ENCODE measurements at regions of chr6 and their contacts with region 1.

Region 1: DNA sequence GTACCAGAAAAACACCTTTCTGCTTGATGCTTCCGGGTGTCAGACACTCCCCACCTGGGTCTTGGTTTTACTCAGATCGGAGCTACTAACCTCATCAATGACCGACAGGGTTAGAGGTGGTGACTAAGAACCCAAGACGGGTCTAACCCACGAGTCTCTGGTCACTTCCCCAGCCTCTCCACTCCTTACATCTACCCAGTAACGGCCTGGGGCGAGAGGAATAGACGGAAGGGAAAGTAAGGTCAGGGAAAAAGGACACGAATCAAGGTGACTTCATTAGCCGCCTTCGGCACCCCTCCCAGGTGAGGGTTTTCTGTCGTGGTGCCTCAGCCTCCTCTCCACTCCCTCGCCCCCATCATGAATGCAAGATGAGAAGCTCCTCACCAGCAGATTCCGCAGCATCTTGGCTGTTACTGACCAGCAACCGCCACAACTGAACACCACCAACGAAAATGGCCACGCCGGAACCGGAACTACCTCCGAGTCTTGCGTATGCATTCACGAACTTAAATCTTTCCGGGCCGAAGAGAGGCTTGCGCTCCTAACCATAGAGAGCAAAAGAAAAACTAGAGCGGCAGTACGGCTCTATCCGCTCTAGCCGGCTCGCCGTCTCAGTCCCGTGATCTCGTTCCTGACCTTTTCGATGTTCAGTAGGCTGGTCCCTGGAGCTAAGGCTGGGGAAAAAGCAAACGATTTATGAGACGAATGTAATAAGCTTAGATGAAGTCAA is at the start of gene COX7A2:
- DNase-seq: peak; percentile 81 to 94
- ATAC-seq: peak; percentile 95 to 98 (median 97)
- H3K4me3 ChIP-seq: peak within 1 kb of the TSS; percentile 78
- H3K4me3 Mint-ChIP-seq: peak within 1 kb of the TSS; percentile 99
- H3K27ac ChIP-seq: peak within 1 kb of the TSS; percentile 86
- H3K27ac Mint-ChIP-seq: peak within 1 kb of the TSS; percentile 97 to 98
- H3K4me1 ChIP-seq: peaks cover 18% of the 10 kb centered on the region
- H3K4me1 Mint-ChIP-seq: peaks cover 14 to 27% of the 10 kb centered on the region in 2 donors
- H3K27me3 ChIP-seq: no peaks in the 10 kb centered on the region
- H3K27me3 Mint-ChIP-seq: peaks cover 15 to 18% of the 10 kb centered on the region in 2 donors
- CTCF ChIP-seq: no peak
- total RNA-seq, gene COX7A2: 161 to 215 (median 166) TPM

Region 2: GRCh38 chr6:74912234-74912633 is 331.3 kb before region 1 on chr6:
- intact Hi-C with region 1: no loop called
- DNase-seq: no peak
- ATAC-seq: no peak
- H3K4me3 ChIP-seq: no peak overlapping the region
- H3K4me3 Mint-ChIP-seq: no peak overlapping the region
- H3K27ac ChIP-seq: no peak overlapping the region
- H3K27ac Mint-ChIP-seq: no peak overlapping the region
- H3K4me1 ChIP-seq: no peaks in the 10 kb centered on the region
- H3K4me1 Mint-ChIP-seq: no peaks in the 10 kb centered on the region
- H3K27me3 ChIP-seq: no peaks in the 10 kb centered on the region
- H3K27me3 Mint-ChIP-seq: no peaks in the 10 kb centered on the region
- CTCF ChIP-seq: no peak

Region 3: GRCh38 chr6:75171567-75171966 is 71.9 kb before region 1 on chr6:
- intact Hi-C with region 1: no loop called
- DNase-seq: no peak
- ATAC-seq: no peak
- H3K4me3 ChIP-seq: no peak overlapping the region
- H3K4me3 Mint-ChIP-seq: no peak overlapping the region
- H3K27ac ChIP-seq: no peak overlapping the region
- H3K27ac Mint-ChIP-seq: no peak overlapping the region
- H3K4me1 ChIP-seq: no peaks in the 10 kb centered on the region
- H3K4me1 Mint-ChIP-seq: no peaks in the 10 kb centered on the region
- H3K27me3 ChIP-seq: no peaks in the 10 kb centered on the region
- H3K27me3 Mint-ChIP-seq: no peaks in the 10 kb centered on the region
- CTCF ChIP-seq: no peak

Region 4: GRCh38 chr6:75601304-75602245 is 358.1 kb after region 1 on chr6 and contains the start of gene SENP6:
- intact Hi-C with region 1: loop called (anchors 10 kb)
- DNase-seq: peak; percentile 71 to 87
- ATAC-seq: peak; percentile 77 to 86 (median 81)
- H3K4me3 ChIP-seq: peak within 1 kb of the TSS; percentile 91
- H3K4me3 Mint-ChIP-seq: peak within 1 kb of the TSS; percentile 95
- H3K27ac ChIP-seq: peak within 1 kb of the TSS; percentile 98
- H3K27ac Mint-ChIP-seq: peak within 1 kb of the TSS; percentile 94 to 97
- H3K4me1 ChIP-seq: peaks cover 11% of the 10 kb centered on the region
- H3K4me1 Mint-ChIP-seq: peaks cover 31 to 52% of the 10 kb centered on the region in 2 donors
- H3K27me3 ChIP-seq: no peaks in the 10 kb centered on the region
- H3K27me3 Mint-ChIP-seq: no peaks in the 10 kb centered on the region
- CTCF ChIP-seq: no peak
- total RNA-seq, gene SENP6: 102 to 117 (median 108) TPM